GM13977 (cell line): ENCODE measurements at regions of chr17 and their contacts with region 1.

Region 1: DNA sequence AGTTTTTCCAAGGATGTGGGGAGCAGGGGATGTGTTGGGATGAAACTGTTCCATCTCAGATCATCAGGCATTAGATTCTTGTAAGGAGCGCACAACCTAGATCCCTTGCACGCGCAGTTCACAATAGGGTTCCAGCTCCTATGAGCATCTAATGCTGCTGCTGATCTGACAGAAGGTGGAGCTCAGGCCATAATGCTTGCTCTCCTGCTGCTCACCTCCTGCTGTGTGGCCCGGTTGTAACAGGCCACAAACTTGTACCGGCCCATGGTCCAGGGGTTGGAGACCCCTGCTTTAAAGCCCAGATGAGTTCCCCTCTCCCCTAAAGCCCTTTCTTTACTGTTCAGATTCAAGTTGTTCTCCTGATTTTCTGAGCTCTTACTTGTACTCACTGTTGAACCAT is 44.8 kb downstream of the RNF135 start:
- DNase-seq: no peak
- CTCF ChIP-seq: peak; percentile 24

Region 2: DNA sequence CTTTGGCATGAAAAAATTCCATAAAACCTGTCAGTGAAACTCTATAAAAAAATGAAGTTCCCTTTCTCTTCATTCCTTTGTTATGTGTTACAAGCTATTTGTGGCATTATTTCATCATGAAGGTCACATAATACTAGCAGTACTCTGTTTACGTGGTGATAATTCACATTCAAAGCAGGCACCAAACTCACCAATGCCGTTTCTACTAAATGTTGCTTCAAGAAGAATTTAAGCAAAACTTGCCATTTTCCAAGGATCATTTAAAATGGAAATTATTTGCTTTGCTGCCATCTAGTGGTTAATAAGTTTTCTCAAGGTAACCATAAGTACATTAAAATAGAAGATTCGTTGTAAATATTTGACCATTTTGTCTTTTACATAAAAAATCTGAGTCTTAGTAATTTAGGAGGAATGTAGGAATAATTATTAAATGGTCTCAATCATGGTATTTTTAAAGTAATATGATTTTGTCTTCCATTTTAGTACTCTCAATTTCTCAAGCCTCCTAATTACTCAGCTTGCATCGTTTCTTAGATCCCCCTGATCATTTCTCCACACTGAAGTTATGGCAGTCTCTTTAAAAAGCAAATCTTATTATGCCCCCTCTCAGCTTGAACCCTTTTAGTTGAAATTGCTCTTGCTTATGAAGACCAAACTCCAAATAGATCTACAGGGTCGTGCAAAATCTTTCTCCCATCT is 200.6 kb after region 1 on chr17:
- in situ Hi-C with region 1: loop called (anchors 10 kb)
- DNase-seq: peak; percentile 25
- CTCF ChIP-seq: peak; percentile 37

Region 3: GRCh38 chr17:31373150-31374093 is 357.8 kb after region 1 on chr17:
- in situ Hi-C with region 1: loop called (anchors 10 kb)
- DNase-seq: peak; percentile 35
- CTCF ChIP-seq: peak; percentile 53